Activated B cell treated with CpG ODN at 0.5 μM for 24 hours (primary cell): ENCODE measurements at regions of chr2 and their contacts with region 1.

Region 1: DNA sequence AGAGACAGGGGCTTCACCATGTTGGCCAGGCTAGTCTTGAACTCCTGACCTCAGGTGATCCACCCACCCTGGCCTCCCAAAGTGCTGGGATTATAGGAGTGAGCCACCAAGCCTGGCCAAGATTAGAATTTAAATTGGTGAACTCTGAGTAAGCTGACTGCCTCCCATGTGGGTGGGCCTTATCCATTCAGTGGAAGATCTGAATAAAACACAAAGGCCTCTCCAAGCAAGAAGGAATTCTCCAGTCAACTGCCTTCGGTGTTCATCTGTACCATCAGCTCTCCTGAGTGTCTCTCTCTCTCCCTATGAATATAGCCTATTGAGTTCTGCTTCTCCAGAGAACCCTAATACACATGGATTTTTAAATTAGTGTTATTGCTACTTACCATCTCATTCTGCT is 36.4 kb downstream of the FBXO11 start:
- DNase-seq: no peak
- ATAC-seq: no peak
- H3K4me3 Mint-ChIP-seq: no peak overlapping the region
- H3K27ac Mint-ChIP-seq: peak overlapping the region; percentile 50
- H3K4me1 Mint-ChIP-seq: peaks cover 75% of the 10 kb centered on the region
- H3K27me3 Mint-ChIP-seq: no peaks in the 10 kb centered on the region
- CTCF ChIP-seq: no peak

Region 2: GRCh38 chr2:47891369-47892337 is 21.8 kb after region 1 on chr2:
- CTCF ChIA-PET with region 1: no interaction called
- POLR2A ChIA-PET with region 1: interaction called, 6 read pairs
- intact Hi-C with region 1: loop called (anchors 2 kb)
- DNase-seq: no peak
- ATAC-seq: no peak
- H3K4me3 Mint-ChIP-seq: no peak overlapping the region
- H3K27ac Mint-ChIP-seq: peak overlapping the region; percentile 13
- H3K4me1 Mint-ChIP-seq: peaks cover 71% of the 10 kb centered on the region
- H3K27me3 Mint-ChIP-seq: no peaks in the 10 kb centered on the region
- CTCF ChIP-seq: no peak

Region 3: GRCh38 chr2:47897883-47898731 is 28.2 kb after region 1 on chr2:
- CTCF ChIA-PET with region 1: interaction called, 3 read pairs
- POLR2A ChIA-PET with region 1: interaction called, 17 read pairs
- intact Hi-C with region 1: no loop called
- DNase-seq: no peak
- ATAC-seq: peak; percentile 68
- H3K4me3 Mint-ChIP-seq: peak overlapping the region; percentile 76
- H3K27ac Mint-ChIP-seq: peak overlapping the region; percentile 91
- H3K4me1 Mint-ChIP-seq: peaks cover 80% of the 10 kb centered on the region
- H3K27me3 Mint-ChIP-seq: no peaks in the 10 kb centered on the region
- CTCF ChIP-seq: no peak